Cardiac septum (tissue), 1 donor: ENCODE measurements at regions of chr11 and their contacts with region 1.

Region 1: GRCh38 chr11:57667736-57668435 is at the start of gene ZDHHC5:
- DNase-seq: peak; percentile 99
- total RNA-seq, gene ZDHHC5: 43.4 TPM

Region 2: DNA sequence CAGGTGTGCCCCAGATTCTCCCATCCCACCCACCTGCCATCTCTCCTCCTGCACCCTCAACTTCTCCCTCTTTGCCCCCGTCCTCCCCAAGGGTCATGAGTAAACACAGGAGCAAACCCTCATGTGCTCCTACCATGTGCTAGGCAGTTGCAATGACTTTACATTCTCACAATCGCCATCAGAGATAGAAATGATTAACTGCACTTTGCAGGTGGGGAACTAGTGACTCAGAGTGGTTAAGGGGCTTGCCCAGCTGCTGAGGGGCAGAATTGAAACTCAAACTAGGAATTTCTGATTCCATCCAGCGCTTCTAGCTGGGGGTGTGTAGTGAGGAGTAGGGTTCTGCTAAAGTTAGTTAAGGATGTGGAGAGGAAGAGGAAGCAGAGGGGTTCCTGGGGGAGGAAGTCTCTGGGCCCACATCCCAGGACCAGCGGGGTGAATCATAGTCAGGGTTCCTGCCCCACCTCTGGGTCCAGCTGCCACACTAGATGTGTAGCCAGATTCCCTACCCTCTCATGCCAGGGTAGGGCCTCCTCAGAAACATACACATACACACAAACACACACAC is 261.5 kb before region 1 on chr11:
- intact Hi-C with region 1: no loop called
- DNase-seq: peak; percentile 68

Region 3: DNA sequence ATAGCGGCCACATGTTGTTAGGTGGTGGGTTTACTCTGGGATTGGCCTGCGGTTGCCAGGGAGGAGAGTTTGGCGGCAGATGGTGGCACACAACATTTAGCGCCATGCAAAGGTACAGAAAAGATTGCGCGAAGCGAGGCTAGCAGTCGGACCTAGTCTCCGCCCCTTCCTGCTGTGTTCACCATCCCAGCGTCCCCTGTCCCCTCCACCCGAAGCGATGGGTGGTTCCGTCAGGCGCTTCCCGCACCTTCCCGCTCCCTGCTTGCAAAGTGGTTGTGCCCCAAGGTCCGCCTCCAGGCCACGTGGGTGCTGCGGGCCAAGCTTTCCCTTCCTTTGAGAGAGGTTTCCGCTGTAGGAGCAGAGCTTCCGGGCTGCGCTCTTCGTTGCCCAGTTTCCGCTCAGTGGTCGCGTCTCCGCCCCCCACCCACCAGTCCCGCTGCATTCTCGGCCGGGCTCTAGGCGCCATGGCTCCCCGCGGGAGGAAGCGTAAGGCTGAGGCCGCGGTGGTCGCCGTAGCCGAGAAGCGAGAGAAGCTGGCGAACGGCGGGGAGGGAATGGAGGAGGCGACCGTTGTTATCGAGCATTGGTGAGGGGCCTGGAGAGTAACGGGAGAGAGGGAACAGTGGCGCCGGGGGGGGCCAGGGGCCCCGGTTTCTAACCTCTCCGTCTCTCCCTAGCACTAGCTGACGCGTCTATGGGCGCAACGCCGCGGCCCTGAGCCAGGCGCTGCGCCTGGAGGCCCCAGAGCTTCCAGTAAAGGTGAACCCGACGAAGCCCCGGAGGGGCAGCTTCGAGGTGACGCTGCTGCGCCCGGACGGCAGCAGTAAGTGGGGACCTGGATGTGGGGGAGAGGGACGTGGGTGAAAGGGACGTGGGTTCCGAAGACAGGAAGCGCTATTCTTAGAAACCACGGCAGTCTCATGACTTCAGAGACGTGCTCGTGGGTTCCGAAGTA is 73.5 kb after region 1 on chr11 and contains the start of gene SELENOH:
- intact Hi-C with region 1: loop called (anchors 5 kb)
- DNase-seq: peak; percentile 97
- total RNA-seq, gene SELENOH: 85.5 TPM